ENCODE measurements at regions of chr19 and their contacts with region 1.

Region 1: DNA sequence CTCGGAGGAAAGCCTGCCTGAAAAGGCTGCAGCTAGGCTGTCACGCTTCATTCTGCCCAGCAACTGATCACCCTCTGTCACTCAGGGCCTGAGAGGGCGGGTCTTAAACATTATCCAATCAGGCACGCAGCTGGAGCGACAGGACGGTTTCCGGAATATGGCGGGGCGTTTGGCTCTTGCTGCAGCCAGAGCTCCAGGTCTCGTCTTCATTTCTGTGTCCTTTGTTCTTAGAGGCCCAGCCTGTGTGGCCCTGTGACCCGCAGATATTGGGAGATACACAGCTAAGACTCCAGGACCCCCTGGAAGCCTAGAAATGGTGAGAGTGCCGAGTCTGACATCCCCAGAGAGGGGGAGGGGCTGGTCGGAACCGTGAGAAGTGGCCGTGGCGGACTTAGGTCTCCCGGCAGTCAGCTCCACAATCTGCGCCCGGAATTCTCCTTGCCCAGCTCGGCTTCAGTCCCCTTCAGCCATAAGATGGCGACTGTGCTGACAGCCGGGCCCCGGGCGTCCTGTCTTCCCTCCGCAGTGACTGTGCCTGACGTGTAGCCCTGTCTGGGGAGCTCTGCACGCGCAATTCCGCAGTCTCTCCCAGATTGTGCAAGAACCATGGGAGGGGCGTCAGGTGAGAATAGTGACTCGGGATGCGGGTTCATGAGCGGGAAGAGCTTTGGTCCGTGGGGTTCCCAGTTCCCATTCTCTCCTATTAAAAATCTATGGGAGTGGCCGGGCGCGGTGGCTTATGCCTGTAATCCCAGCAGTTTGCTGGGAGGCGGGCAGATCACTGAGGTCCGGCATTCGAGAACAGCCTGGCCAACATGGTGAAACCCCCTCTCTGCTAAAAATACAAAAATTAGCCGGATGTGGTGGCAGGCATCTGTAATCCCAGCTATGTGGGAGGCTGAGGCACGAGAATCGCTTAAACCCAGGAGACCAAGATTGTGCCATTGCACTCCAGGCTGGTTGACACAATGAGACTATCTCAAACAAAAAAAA is at the start of gene ZNF429:
- DNase-seq: peak; percentile 64 to 94 (median 90)
- ATAC-seq: peak; percentile 100
- H3K4me3 ChIP-seq: peak within 1 kb of the TSS; percentile 100
- H3K4me3 Mint-ChIP-seq: peak within 1 kb of the TSS; percentile 97 to 100 (median 100)
- H3K27ac ChIP-seq: peak within 1 kb of the TSS; percentile 94
- H3K27ac Mint-ChIP-seq: peak within 1 kb of the TSS; percentile 98 to 100 (median 99)
- H3K4me1 ChIP-seq: peaks cover 16 to 27% of the 10 kb centered on the region in 2 donors
- H3K4me1 Mint-ChIP-seq: peaks cover 8 to 56% (median 50%) of the 10 kb centered on the region in 7 donors
- H3K27me3 ChIP-seq: no peaks in the 10 kb centered on the region
- H3K27me3 Mint-ChIP-seq: no peaks in the 10 kb centered on the region
- total RNA-seq, gene ZNF429: 6.4 to 30.7 (median 25.0) TPM

Region 2: DNA sequence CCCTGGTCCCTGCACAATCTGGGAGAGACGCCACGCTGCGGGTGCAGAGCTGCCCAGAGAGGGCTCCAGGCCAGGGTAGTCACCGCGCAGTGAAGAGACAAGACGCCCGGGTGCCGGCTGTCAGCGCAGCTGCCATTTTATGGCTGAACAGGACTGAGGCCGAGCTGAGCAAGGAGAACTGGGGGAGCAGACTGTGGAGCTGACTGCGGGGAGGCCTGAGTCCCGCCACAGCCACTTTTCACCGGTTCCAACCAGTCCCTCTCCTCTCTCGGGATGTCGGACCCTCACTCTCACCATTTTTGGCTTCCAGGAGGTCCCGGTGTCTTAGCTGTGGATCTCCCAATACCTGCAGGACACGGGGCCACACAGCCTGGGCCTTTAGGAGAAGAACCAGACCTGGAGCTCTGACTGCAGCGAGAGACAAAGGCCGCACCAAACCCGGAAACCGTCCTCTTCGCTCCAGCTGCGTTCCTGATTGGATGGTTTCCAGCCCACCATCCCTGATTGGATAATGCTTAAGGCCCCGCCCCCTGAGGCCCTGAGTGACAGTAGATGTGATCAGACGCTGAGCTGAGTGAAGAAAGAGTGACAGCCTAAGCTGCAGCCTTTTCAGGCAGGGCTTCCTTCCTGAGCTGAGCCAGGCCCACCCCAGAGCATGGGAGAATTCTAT is 844.5 kb before region 1 on chr19 and contains the start of gene ZNF626:
- CTCF ChIA-PET with region 1: no interaction called
- POLR2A ChIA-PET with region 1: no interaction called
- intact Hi-C with region 1: loop called in 1 of 2 experiments (anchors 2 kb)
- DNase-seq: peak; percentile 66 to 92 (median 87)
- ATAC-seq: peak; percentile 99
- H3K4me3 ChIP-seq: peak within 1 kb of the TSS; percentile 89
- H3K4me3 Mint-ChIP-seq: peak within 1 kb of the TSS; percentile 83 to 97 (median 92)
- H3K27ac ChIP-seq: peak within 1 kb of the TSS; percentile 91
- H3K27ac Mint-ChIP-seq: peak within 1 kb of the TSS; percentile 86 to 97 (median 95)
- H3K4me1 ChIP-seq: peaks cover 0 to 6% of the 10 kb centered on the region in 2 donors
- H3K4me1 Mint-ChIP-seq: peaks cover 0 to 54% (median 47%) of the 10 kb centered on the region in 7 donors
- H3K27me3 ChIP-seq: no peaks in the 10 kb centered on the region
- H3K27me3 Mint-ChIP-seq: no peaks in the 10 kb centered on the region
- total RNA-seq, gene ZNF626: 2.2 to 20.0 (median 12.4) TPM

Region 3: DNA sequence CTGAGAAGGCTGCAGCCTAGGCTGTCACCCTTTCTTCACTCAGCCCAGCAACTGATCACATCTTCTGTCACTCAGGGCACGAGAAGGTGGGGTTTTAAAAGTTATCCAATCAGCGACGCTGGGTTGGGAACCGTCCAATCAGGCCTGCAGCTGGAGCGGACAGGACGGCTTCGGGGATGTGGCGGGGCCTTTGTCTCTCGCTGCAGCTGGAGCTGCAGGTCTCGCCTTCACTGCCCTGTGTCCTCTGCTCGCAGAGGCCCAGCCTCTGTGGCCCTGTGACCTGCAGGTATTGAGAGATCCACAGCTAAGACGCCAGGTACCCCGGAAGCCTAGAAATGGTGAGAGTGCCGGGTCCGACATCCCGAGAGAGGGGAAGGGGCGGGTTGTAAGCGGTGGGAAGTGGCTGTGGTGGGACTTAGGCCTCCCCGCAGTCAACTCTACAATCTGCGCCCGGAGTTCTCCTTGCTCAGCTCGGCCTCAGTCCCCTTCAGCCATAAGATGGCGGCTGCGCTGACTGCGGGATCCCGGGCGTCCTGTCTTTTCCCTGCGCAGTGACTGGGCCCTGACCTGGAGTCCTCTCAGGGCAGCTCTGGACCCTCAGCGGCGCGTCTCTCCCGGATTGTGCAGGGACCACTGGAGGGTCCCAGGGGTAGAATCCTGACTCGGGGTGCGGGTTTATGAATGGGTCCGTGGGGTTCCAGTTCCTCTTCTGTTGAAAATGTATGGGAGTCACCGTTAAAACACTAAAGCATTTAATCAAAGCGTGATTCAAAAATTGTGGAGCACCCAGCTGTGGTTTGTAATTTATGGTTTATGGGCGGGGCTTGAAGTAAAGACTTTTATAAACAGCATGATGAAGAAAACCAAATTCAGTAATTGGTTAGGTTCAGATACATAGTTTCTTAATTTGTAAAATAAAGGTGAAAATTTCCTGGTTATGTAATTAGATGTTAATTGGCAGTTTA is 423.5 kb before region 1 on chr19 and contains the start of gene ZNF714:
- CTCF ChIA-PET with region 1: no interaction called
- POLR2A ChIA-PET with region 1: interaction called, 8 read pairs
- intact Hi-C with region 1: loop called in 1 of 2 experiments (anchors 10 kb)
- DNase-seq: peak; percentile 55 to 90 (median 80)
- ATAC-seq: peak; percentile 100
- H3K4me3 ChIP-seq: peak within 1 kb of the TSS; percentile 92
- H3K4me3 Mint-ChIP-seq: peak within 1 kb of the TSS; percentile 91 to 100 (median 99)
- H3K27ac ChIP-seq: peak within 1 kb of the TSS; percentile 74
- H3K27ac Mint-ChIP-seq: peak within 1 kb of the TSS; percentile 85 to 99 (median 95)
- H3K4me1 ChIP-seq: no peaks in the 10 kb centered on the region
- H3K4me1 Mint-ChIP-seq: peaks cover 3 to 24% (median 18%) of the 10 kb centered on the region in 7 donors
- H3K27me3 ChIP-seq: no peaks in the 10 kb centered on the region
- H3K27me3 Mint-ChIP-seq: no peaks in the 10 kb centered on the region
- total RNA-seq, gene ZNF714: 7.4 to 22.3 (median 13.3) TPM

Region 4: GRCh38 chr19:21158523-21159135 is 347.1 kb before region 1 on chr19:
- CTCF ChIA-PET with region 1: no interaction called
- POLR2A ChIA-PET with region 1: no interaction called
- intact Hi-C with region 1: no loop called
- DNase-seq: no peak
- ATAC-seq: no peak
- H3K4me3 ChIP-seq: no peak overlapping the region
- H3K4me3 Mint-ChIP-seq: peak overlapping the region in 3 of 10 donors; percentile 20 to 42 (median 25)
- H3K27ac ChIP-seq: no peak overlapping the region
- H3K27ac Mint-ChIP-seq: peak overlapping the region in 2 of 9 donors; percentile 51 to 56
- H3K4me1 ChIP-seq: no peaks in the 10 kb centered on the region
- H3K4me1 Mint-ChIP-seq: peaks cover 0 to 42% (median 22%) of the 10 kb centered on the region in 7 donors
- H3K27me3 ChIP-seq: no peaks in the 10 kb centered on the region
- H3K27me3 Mint-ChIP-seq: no peaks in the 10 kb centered on the region

Region 5: DNA sequence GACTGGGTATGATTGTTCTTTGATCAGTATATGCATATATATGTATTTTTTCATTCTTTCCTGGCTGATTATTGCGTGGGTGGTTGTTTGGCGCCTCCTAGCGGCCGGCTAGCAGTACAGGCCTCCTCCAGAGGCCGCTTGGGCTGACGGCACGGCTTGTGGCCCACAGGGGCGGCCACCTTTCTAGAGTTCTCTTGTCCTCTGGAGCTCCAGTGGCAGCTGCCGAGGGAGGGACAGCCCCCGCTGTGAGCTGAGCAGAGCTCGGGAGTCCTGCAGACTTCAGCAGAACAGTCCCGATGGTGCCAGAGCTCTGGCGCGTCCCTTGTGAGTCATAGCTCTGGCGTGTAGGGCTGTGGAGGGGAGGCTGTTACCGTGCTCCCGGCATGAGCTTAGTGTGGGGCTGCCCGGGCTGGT is 22.9 kb before region 1 on chr19:
- CTCF ChIA-PET with region 1: interaction called, 16 read pairs
- POLR2A ChIA-PET with region 1: no interaction called
- intact Hi-C with region 1: loop called in 1 of 2 experiments (anchors 1 kb)
- DNase-seq: peak; percentile 12 to 73 (median 61)
- ATAC-seq: peak; percentile 89
- H3K4me3 ChIP-seq: no peak overlapping the region
- H3K4me3 Mint-ChIP-seq: peak overlapping the region in 1 of 10 donors; percentile 46
- H3K27ac ChIP-seq: no peak overlapping the region
- H3K27ac Mint-ChIP-seq: no peak overlapping the region
- H3K4me1 ChIP-seq: no peaks in the 10 kb centered on the region
- H3K4me1 Mint-ChIP-seq: peaks cover 0 to 5% (median 0%) of the 10 kb centered on the region in 7 donors
- H3K27me3 ChIP-seq: no peaks in the 10 kb centered on the region
- H3K27me3 Mint-ChIP-seq: no peaks in the 10 kb centered on the region

Region 6: DNA sequence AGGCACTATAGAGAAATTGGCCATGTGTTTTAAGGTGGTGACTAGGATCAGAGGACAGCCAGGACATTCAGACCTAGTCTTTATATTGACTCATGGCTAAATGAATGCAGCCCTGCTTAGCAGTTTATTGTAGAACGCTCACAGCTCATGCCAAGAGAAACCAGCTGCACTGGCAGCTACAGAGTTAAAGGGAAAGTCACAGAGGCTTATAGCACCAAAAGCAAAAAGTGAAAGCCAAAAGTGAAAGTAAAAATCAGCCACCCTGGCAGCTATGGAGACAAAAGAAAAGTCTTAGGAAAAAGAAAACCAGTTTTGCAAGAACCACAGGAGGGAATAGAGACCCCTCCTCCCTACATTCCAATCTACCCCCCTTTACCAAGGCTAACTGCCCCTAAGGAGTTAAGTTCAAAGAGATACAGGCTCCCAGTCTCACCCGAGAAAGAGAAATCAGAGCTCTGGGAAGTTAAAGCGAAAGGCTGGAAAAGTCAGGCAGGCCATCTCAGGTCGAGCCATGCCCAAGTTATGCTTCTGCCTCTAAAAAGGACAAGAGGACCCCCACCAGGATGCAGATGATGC is 98.7 kb after region 1 on chr19:
- CTCF ChIA-PET with region 1: interaction called, 5 read pairs
- POLR2A ChIA-PET with region 1: interaction called, 18 read pairs
- intact Hi-C with region 1: loop called in 1 of 2 experiments (anchors 1 kb)
- DNase-seq: peak in 6 of 9 donors; percentile 24 to 55 (median 49)
- ATAC-seq: peak; percentile 67
- H3K4me3 ChIP-seq: peak overlapping the region; percentile 65
- H3K4me3 Mint-ChIP-seq: peak overlapping the region; percentile 80 to 96 (median 92)
- H3K27ac ChIP-seq: peak overlapping the region; percentile 73
- H3K27ac Mint-ChIP-seq: peak overlapping the region; percentile 84 to 97 (median 96)
- H3K4me1 ChIP-seq: peaks cover 0 to 9% of the 10 kb centered on the region in 2 donors
- H3K4me1 Mint-ChIP-seq: peaks cover 17 to 31% (median 21%) of the 10 kb centered on the region in 7 donors
- H3K27me3 ChIP-seq: no peaks in the 10 kb centered on the region
- H3K27me3 Mint-ChIP-seq: no peaks in the 10 kb centered on the region

Region 7: DNA sequence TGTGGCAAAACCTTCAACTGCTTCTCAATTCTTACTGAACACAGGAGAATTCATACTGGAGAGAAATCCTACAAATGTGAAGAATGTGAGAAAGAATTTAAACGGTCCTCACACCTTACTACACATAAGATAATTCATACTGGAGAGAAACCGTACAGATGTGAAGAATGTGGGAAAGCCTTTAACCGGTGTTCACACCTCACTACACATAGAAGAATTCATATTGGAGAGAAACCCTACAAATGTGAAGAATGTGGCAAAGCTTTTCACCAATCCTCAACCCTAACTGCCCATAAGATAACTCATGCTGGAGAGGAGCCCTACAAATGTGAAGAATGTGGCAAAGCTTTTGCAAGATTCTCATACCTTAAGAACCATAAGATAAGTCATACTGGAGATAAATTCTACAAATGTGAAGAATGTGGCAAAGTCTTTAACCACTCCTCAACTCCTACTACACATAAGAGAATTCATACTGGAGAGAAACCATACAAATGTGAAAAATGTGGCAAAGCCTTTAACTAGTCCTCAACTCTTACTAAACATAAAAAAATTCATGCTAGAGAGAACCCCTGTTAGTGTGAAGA is 149.9 kb after region 1 on chr19:
- CTCF ChIA-PET with region 1: no interaction called
- POLR2A ChIA-PET with region 1: no interaction called
- intact Hi-C with region 1: no loop called
- DNase-seq: no peak
- ATAC-seq: no peak
- H3K4me3 ChIP-seq: no peak overlapping the region
- H3K4me3 Mint-ChIP-seq: no peak overlapping the region
- H3K27ac ChIP-seq: no peak overlapping the region
- H3K27ac Mint-ChIP-seq: no peak overlapping the region
- H3K4me1 ChIP-seq: no peaks in the 10 kb centered on the region
- H3K4me1 Mint-ChIP-seq: no peaks in the 10 kb centered on the region
- H3K27me3 ChIP-seq: no peaks in the 10 kb centered on the region
- H3K27me3 Mint-ChIP-seq: peaks cover 0 to 3% (median 0%) of the 10 kb centered on the region in 5 donors

Region 8: GRCh38 chr19:21812450-21812849 is 306.7 kb after region 1 on chr19:
- CTCF ChIA-PET with region 1: no interaction called
- POLR2A ChIA-PET with region 1: no interaction called
- intact Hi-C with region 1: no loop called
- DNase-seq: no peak
- ATAC-seq: no peak
- H3K4me3 ChIP-seq: no peak overlapping the region
- H3K4me3 Mint-ChIP-seq: no peak overlapping the region
- H3K27ac ChIP-seq: no peak overlapping the region
- H3K27ac Mint-ChIP-seq: no peak overlapping the region
- H3K4me1 ChIP-seq: no peaks in the 10 kb centered on the region
- H3K4me1 Mint-ChIP-seq: no peaks in the 10 kb centered on the region
- H3K27me3 ChIP-seq: no peaks in the 10 kb centered on the region
- H3K27me3 Mint-ChIP-seq: no peaks in the 10 kb centered on the region

Region 9: DNA sequence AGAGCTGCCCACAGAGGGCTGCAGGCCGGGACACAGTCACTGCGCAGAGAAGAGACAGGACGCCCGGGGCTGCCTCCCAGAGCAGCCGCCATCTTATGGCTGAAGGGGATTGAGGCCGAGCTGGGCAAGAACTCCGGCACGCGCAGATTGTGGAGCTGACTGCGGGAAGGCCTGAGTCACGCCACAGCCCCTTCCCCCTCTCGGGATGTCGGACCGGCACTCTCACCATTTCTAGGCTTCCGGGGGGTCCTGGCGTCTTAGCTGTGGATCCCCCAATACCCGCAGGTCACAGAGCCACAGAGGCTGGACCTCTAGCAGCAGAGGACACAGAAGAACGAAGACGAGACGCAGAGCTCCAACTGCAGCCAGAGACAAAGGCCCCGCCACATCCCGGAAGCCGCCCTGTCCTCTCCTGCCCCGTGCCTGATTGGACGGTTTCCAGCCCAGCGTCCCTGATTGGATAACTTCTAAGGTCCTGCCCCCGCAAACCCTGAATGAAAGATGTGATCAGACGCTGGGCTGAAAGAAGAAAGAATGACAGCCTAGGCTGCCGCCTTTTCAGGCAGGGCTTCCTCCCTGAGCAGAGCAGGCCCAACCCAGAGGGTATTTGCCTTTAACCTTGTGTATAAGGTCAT is 330.2 kb after region 1 on chr19 and contains the start of gene ZNF43:
- CTCF ChIA-PET with region 1: no interaction called
- POLR2A ChIA-PET with region 1: interaction called, 11 read pairs
- intact Hi-C with region 1: loop called (anchors 5 kb)
- DNase-seq: peak; percentile 76 to 96 (median 93)
- ATAC-seq: peak; percentile 99
- H3K4me3 ChIP-seq: peak within 1 kb of the TSS; percentile 97
- H3K4me3 Mint-ChIP-seq: peak within 1 kb of the TSS; percentile 93 to 99 (median 98)
- H3K27ac ChIP-seq: peak within 1 kb of the TSS; percentile 88
- H3K27ac Mint-ChIP-seq: peak within 1 kb of the TSS; percentile 96 to 99 (median 98)
- H3K4me1 ChIP-seq: peaks cover 5 to 9% of the 10 kb centered on the region in 2 donors
- H3K4me1 Mint-ChIP-seq: peaks cover 3 to 48% (median 35%) of the 10 kb centered on the region in 7 donors
- H3K27me3 ChIP-seq: no peaks in the 10 kb centered on the region
- H3K27me3 Mint-ChIP-seq: no peaks in the 10 kb centered on the region
- total RNA-seq, gene ZNF43: 20.5 to 39.3 (median 36.2) TPM